ENCODE measurements at regions of chr17 and their contacts with region 1.

Region 1: DNA sequence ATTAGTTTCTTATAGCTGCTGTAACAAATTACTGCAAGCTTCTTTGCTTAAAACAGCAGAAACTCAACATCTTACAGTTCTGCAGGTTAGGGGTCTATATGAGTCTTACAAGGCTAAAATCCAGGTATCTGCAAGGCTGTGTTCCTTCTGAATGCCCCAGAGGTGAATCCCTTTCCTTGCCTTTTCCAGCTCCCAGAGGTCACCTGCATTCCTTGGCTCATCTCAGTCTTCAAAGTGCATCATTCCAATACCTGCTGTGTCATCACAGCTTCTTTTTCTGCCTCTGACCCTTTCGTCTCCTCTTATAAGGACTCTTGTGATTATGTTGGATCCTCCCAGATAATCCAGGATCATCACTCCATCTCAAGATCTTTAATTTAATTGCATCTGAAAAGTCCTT is 291.4 kb upstream of the CA10 start:
- DNase-seq: no peak
- H3K4me3 ChIP-seq: no peak overlapping the region
- H3K27ac ChIP-seq: no peak overlapping the region
- H3K4me1 ChIP-seq: no peaks in the 10 kb centered on the region
- H3K27me3 ChIP-seq: no peaks in the 10 kb centered on the region
- CTCF ChIP-seq: no peak

Region 2: GRCh38 chr17:52495646-52496045 is 45.7 kb after region 1 on chr17:
- CTCF ChIA-PET with region 1: no interaction called
- dilution Hi-C with region 1: no loop called
- in situ Hi-C with region 1: no loop called
- intact Hi-C with region 1: no loop called
- DNase-seq: no peak
- H3K4me3 ChIP-seq: no peak overlapping the region
- H3K27ac ChIP-seq: no peak overlapping the region
- H3K4me1 ChIP-seq: no peaks in the 10 kb centered on the region
- H3K27me3 ChIP-seq: no peaks in the 10 kb centered on the region
- CTCF ChIP-seq: no peak

Region 3: DNA sequence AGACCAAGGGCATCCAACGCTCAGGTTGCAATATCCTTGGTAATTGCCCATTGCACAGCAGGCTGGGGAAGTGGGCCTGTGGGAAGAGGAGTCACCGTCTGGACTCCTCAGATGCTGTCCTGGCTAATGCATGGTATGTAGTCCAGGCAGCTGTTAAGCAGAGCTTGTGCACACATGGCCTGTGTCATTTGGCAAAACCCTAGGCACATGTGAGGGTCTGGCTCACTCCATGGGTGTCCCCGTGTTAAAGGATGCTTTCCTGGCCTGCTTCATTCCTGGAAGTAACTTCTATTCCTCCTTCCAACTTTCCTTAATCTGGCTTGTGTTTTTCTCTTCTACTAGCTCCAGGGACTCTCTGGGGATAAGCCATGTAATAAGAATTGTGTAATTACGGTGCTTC is 86.5 kb after region 1 on chr17:
- CTCF ChIA-PET with region 1: no interaction called
- dilution Hi-C with region 1: no loop called
- in situ Hi-C with region 1: loop called in 1 of 2 experiments (anchors 25 kb)
- intact Hi-C with region 1: no loop called
- DNase-seq: no peak
- H3K4me3 ChIP-seq: no peak overlapping the region
- H3K27ac ChIP-seq: no peak overlapping the region
- H3K4me1 ChIP-seq: no peaks in the 10 kb centered on the region
- H3K27me3 ChIP-seq: no peaks in the 10 kb centered on the region
- CTCF ChIP-seq: no peak

Measured in mammary epithelial cell (primary cell).